GM10248 (cell line): ENCODE measurements at regions of chr12 and their contacts with region 1.

Region 1: GRCh38 chr12:68158432-68158831 is 1.1 kb downstream of the IFNG start:
- DNase-seq: no peak
- CTCF ChIP-seq: peak; percentile 20

Region 2: GRCh38 chr12:68040450-68041075 is 117.9 kb before region 1 on chr12:
- CTCF ChIA-PET with region 1: interaction called, 14 read pairs
- POLR2A ChIA-PET with region 1: no interaction called
- DNase-seq: peak; percentile 67
- CTCF ChIP-seq: peak; percentile 88

Region 3: GRCh38 chr12:68113644-68114043 is 44.8 kb before region 1 on chr12:
- CTCF ChIA-PET with region 1: interaction called, 25 read pairs
- POLR2A ChIA-PET with region 1: no interaction called
- DNase-seq: peak; percentile 12
- CTCF ChIP-seq: peak; percentile 35

Region 4: DNA sequence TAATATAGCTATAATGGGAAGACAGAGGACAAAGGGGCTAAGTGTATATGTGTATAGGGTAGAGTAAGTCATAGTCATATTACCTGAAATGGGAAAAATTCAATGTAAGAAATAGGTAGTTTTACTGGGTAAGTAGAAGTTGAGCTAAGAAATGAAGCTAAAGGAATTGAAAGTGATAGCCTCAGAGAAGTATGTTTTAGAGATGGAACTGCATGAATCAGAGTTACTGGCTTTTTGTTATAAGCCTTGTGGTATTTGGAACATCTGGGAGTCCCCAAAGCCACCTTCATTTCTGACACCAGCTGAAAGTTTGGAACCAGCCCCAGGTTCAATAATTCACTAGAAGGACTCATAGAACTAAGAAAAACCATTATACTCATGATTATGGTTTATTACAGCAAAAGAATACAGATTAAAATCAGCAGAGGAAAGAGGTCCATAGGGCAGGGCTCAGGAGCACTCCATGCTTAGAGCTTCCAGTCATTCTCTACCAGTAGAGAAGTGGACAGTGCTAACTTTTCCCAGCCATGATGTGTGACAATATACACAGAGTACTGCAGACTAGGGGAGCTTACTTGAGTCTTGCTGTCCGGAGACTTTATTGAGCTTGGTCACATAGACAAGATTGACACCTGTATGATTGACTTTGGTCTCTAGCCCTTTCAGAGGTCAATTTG is 10.9 kb after region 1 on chr12:
- CTCF ChIA-PET with region 1: interaction called, 13 read pairs
- POLR2A ChIA-PET with region 1: no interaction called
- DNase-seq: no peak
- CTCF ChIP-seq: no peak